ENCODE measurements at regions of chr4 and their contacts with region 1.

Region 1: GRCh38 chr4:78661921-78662521 is 110.5 kb downstream of the ANXA3 start:
- DNase-seq: no peak
- ATAC-seq: no peak
- H3K4me3 ChIP-seq: no peak overlapping the region
- H3K4me3 Mint-ChIP-seq: peak overlapping the region in 4 of 10 donors; percentile 1 to 39 (median 12)
- H3K27ac ChIP-seq: no peak overlapping the region
- H3K27ac Mint-ChIP-seq: peak overlapping the region in 1 of 9 donors; percentile 11
- H3K4me1 ChIP-seq: peaks cover 8 to 29% of the 10 kb centered on the region in 2 donors
- H3K4me1 Mint-ChIP-seq: peaks cover 36 to 61% (median 56%) of the 10 kb centered on the region in 7 donors
- H3K27me3 ChIP-seq: no peaks in the 10 kb centered on the region
- H3K27me3 Mint-ChIP-seq: no peaks in the 10 kb centered on the region

Region 2: DNA sequence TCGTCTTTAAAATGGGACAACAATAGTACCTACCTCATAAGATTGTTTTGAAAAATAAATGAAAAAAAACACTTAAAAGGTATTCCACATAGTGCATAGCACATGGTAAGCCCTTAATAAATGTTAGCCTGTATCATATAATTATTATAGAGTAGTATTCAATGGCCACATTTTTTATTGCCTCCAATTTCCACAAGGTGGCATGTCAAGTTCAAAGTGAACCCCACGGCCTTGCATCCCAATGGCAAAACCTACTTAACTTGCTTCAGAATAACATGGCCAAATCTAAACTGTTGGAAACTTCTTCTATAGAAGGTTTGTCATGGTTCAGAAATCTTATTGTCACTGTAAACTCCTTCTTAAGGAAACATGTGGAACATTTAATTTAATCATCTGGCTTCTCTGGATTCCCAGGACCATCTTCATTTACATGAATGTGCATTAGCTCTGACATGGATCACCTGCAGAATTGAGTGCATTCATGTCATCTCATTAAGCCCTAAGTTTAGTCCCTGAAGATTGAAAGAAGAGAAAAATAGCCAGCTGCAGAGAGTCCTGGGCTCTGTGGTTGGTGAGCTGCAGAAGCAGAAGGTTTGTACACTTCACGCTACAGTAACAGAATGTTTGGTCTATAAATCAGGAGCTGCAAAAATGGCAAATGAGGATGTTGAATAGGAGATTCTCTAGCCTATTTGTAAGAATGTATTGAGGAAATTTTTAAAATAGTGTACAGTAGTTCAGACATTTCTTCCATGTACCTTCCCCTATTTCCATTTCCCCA is 49.4 kb before region 1 on chr4:
- CTCF ChIA-PET with region 1: no interaction called
- POLR2A ChIA-PET with region 1: no interaction called
- intact Hi-C with region 1: loop called (anchors 1 to 5 kb)
- DNase-seq: no peak
- ATAC-seq: peak; percentile 47
- H3K4me3 ChIP-seq: no peak overlapping the region
- H3K4me3 Mint-ChIP-seq: peak overlapping the region in 1 of 10 donors; percentile 39
- H3K27ac ChIP-seq: no peak overlapping the region
- H3K27ac Mint-ChIP-seq: peak overlapping the region in 4 of 9 donors; percentile 16 to 66 (median 57)
- H3K4me1 ChIP-seq: peaks cover 0 to 36% of the 10 kb centered on the region in 2 donors
- H3K4me1 Mint-ChIP-seq: peaks cover 13 to 76% (median 55%) of the 10 kb centered on the region in 7 donors
- H3K27me3 ChIP-seq: no peaks in the 10 kb centered on the region
- H3K27me3 Mint-ChIP-seq: no peaks in the 10 kb centered on the region

Region 3: DNA sequence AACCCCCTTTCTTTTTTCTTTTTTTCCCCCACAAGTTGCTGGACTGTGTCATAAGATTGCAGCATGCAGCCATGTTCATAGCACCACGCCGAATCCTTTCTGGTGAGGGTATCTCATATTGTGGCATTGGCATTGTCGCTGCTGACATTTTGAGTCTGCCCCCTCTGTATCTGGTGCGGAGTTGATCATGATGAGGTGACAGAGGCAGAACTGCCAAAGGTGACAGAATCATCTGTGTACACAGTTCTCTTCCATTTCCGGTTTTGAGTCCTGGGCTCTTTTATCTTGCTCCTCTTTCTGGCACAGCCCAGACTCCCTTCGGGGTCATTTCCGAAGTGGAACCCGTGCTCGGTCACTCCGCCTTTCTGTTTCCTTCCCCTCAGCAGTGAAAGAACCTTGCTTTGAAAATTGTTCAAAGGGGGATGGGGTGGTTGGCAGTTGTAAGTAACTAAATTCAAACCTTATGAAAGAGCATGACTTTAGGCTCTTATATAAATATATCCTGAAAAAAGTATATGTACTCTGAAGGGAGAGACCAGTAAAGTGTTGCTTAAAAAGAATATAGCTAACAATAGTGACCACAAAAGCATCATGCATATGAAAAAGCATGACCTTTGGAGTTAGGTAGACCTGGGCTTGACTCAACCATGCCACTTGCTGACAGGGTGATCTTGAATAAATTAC is 59.1 kb after region 1 on chr4:
- CTCF ChIA-PET with region 1: no interaction called
- POLR2A ChIA-PET with region 1: no interaction called
- intact Hi-C with region 1: no loop called
- DNase-seq: peak in 8 of 9 donors; percentile 11 to 38 (median 24)
- ATAC-seq: peak; percentile 68
- H3K4me3 ChIP-seq: peak overlapping the region; percentile 24
- H3K4me3 Mint-ChIP-seq: peak overlapping the region; percentile 43 to 79 (median 70)
- H3K27ac ChIP-seq: no peak overlapping the region
- H3K27ac Mint-ChIP-seq: peak overlapping the region in 8 of 9 donors; percentile 4 to 76 (median 48)
- H3K4me1 ChIP-seq: peaks cover 0 to 12% of the 10 kb centered on the region in 2 donors
- H3K4me1 Mint-ChIP-seq: peaks cover 7 to 21% (median 18%) of the 10 kb centered on the region in 7 donors
- H3K27me3 ChIP-seq: no peaks in the 10 kb centered on the region
- H3K27me3 Mint-ChIP-seq: peaks cover 0 to 2% (median 0%) of the 10 kb centered on the region in 5 donors

Region 4: DNA sequence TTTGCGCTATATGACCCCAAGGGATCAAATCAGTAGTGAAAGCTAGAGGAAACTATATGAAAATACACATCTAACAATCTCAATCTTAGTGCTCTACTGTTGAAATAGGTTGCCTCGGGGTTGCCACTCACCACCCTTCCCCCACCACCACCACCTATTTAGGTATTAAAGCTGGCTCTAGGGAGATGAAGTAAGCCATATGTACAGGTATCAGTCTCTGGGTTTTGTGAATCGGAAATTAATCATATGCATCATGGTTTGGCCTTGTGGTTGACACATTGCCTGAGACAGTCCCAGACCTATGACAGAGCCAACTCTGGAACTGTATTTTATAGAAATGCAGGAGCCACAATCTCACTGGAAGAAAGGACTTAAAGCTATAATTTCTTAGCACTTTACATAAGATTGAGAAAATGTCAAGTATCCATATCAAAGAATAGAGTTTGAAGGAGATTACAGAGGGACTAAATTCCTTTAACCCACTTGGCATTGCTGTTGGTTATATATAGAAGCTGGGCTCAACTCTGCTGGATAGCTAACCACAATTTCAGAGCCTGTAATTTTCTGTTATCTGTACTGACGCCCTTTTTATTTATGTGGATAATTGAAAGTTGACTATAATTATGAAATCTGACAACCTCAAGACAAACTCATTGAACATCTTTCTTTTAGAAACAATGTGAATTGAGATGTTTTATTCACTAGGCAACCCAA is 87.4 kb after region 1 on chr4:
- CTCF ChIA-PET with region 1: no interaction called
- POLR2A ChIA-PET with region 1: no interaction called
- intact Hi-C with region 1: no loop called
- DNase-seq: no peak
- ATAC-seq: no peak
- H3K4me3 ChIP-seq: no peak overlapping the region
- H3K4me3 Mint-ChIP-seq: no peak overlapping the region
- H3K27ac ChIP-seq: no peak overlapping the region
- H3K27ac Mint-ChIP-seq: no peak overlapping the region
- H3K4me1 ChIP-seq: no peaks in the 10 kb centered on the region
- H3K4me1 Mint-ChIP-seq: peaks cover 0 to 1% (median 0%) of the 10 kb centered on the region in 7 donors
- H3K27me3 ChIP-seq: no peaks in the 10 kb centered on the region
- H3K27me3 Mint-ChIP-seq: peaks cover 0 to 3% (median 0%) of the 10 kb centered on the region in 5 donors

Region 5: GRCh38 chr4:78938868-78939666 is 277.0 kb after region 1 on chr4 and contains the start of gene PAQR3:
- CTCF ChIA-PET with region 1: no interaction called
- POLR2A ChIA-PET with region 1: no interaction called
- intact Hi-C with region 1: loop called in 1 of 2 experiments (anchors 5 kb)
- DNase-seq: peak; percentile 70 to 91 (median 86)
- ATAC-seq: peak; percentile 98
- H3K4me3 ChIP-seq: peak within 1 kb of the TSS; percentile 86
- H3K4me3 Mint-ChIP-seq: peak within 1 kb of the TSS; percentile 92 to 100 (median 98)
- H3K27ac ChIP-seq: peak within 1 kb of the TSS; percentile 82
- H3K27ac Mint-ChIP-seq: peak within 1 kb of the TSS; percentile 82 to 97 (median 92)
- H3K4me1 ChIP-seq: peaks cover 5 to 14% of the 10 kb centered on the region in 2 donors
- H3K4me1 Mint-ChIP-seq: peaks cover 23 to 54% (median 39%) of the 10 kb centered on the region in 7 donors
- H3K27me3 ChIP-seq: no peaks in the 10 kb centered on the region
- H3K27me3 Mint-ChIP-seq: peaks cover 8 to 18% (median 11%) of the 10 kb centered on the region in 5 donors
- total RNA-seq, gene PAQR3: 13.1 to 24.3 (median 15.8) TPM

Region 6: DNA sequence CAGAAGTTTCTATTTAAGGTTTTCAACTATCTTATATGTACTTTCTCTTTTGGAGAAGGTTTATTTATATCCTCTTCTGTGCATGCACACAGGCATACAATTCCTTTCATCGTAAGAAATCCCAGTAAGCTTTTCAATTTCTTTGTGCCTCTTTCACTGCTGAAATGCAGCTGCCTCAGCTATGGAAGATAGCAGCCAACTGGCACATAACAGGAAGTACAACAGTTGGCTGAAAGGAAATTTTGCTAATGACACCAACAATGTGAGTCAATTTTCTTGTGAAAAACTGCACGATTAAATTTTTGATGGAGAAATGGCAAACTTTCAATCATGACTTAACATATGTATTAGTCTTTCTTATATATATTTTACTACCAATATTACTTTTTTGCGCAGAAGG is 351.7 kb after region 1 on chr4:
- CTCF ChIA-PET with region 1: no interaction called
- POLR2A ChIA-PET with region 1: no interaction called
- intact Hi-C with region 1: no loop called
- DNase-seq: no peak
- ATAC-seq: no peak
- H3K4me3 ChIP-seq: no peak overlapping the region
- H3K4me3 Mint-ChIP-seq: no peak overlapping the region
- H3K27ac ChIP-seq: no peak overlapping the region
- H3K27ac Mint-ChIP-seq: no peak overlapping the region
- H3K4me1 ChIP-seq: no peaks in the 10 kb centered on the region
- H3K4me1 Mint-ChIP-seq: no peaks in the 10 kb centered on the region
- H3K27me3 ChIP-seq: no peaks in the 10 kb centered on the region
- H3K27me3 Mint-ChIP-seq: peaks cover 5 to 21% (median 18%) of the 10 kb centered on the region in 5 donors

Measured in naive thymus-derived CD4-positive, alpha-beta T cell (primary cell).